Ascending aorta (tissue), 2 donors: ENCODE measurements at regions of chr19 and their contacts with region 1.

Region 1: GRCh38 chr19:37334179-37335071 is 36.5 kb upstream of the ZNF527 start:
- DNase-seq: peak; percentile 69 to 95
- H3K4me3 ChIP-seq: peak overlapping the region; percentile 65 to 67
- H3K27ac ChIP-seq: peak overlapping the region; percentile 57 to 77
- H3K4me1 ChIP-seq: peaks cover 0 to 12% of the 10 kb centered on the region in 2 donors
- H3K27me3 ChIP-seq: no peaks in the 10 kb centered on the region
- CTCF ChIP-seq: no peak

Region 2: DNA sequence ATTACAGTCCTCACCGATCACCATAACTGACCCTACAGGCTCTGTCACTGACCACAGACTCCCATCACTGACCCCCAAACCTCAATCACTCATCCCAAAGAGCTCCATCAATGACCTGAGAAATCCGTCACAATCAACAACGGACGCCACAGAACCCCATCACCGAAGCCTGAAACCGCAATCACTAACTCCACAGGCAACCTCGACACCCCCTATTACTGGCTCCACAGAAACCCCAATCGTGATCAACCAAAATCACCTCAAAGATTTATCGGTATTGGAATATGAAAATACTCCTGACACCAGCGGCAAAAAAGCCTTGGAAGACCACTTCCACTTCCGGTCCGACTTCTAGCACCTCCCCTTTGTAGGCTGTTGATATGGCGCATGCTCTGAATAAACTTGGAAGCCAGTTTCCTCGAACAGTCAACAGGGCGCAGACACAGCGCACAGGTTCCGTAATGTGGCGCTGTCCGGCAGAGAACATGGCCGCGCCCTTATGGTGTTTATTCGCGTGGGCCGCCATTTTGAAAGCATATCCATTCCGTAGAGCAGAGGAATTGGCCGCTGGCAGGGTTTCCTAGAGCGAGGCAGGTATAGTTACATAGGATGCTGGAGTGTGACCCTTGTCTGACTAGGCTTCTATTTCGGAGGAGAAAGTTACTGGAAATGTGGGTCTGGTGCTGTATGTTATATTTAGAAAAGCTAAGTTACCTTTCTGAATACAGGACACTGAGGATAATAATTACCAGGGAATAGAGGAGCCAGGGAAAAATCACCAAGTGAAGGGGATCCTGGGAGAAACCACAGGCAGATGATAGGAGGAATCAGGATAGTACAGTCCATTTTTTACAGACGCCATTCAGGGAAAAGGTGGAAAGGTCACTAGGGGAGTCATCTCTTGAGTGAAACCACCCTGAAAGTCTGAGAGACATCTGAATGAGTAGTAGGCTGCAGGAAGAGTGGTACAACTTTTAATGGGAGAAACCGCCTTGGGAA is 161.8 kb before region 1 on chr19 and contains the start of gene ZNF585A:
- intact Hi-C with region 1: loop called (anchors 10 kb)
- DNase-seq: peak; percentile 85 to 97
- H3K4me3 ChIP-seq: peak within 1 kb of the TSS; percentile 59 to 65
- H3K27ac ChIP-seq: peak within 1 kb of the TSS; percentile 62 to 68
- H3K4me1 ChIP-seq: no peaks in the 10 kb centered on the region
- H3K27me3 ChIP-seq: no peaks in the 10 kb centered on the region
- CTCF ChIP-seq: peak in 1 of 3 experiments; percentile 35
- total RNA-seq, gene ZNF585A: 8.4 TPM

Region 3: DNA sequence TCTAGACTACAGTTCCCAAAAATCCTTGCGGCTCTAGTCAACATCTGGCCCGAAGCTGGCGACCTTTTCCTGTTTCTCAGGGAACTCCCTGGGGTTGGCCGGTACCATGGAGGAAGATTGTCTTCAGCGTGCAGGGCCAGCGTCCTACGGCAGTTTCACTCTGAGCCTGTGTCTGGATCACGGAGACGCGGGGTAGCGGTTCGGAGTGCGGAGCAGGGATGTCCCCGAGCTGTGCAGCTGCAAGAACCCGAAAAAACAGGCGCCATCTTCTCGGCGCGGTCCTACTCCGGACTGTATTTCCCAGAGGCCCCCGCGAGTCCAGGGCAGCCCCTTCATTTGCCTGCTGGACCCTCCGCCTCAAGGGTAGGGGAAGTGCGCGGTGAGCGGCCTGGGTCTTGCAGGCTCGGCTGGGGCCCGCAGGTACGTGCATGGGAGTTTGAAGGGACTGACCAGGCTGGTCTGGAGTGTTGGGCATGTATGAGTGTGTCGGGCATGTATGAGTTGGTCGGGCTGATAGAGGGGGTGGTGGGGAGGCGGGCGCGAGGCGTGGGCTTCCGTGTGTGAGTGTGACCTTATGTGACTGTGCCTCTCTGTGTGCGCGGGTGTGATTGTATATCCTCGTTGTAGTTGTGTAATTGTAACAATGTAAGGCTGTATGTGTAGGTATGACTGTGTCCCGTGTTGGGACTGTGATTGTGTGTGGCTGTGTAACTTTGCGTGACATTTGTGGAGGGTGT is 116.4 kb before region 1 on chr19 and contains the start of gene ZNF383:
- intact Hi-C with region 1: loop called (anchors 5 kb)
- DNase-seq: peak; percentile 47 to 91
- H3K4me3 ChIP-seq: peak within 1 kb of the TSS; percentile 60 to 73
- H3K27ac ChIP-seq: peak within 1 kb of the TSS; percentile 75 to 80
- H3K4me1 ChIP-seq: peaks cover 0 to 4% of the 10 kb centered on the region in 2 donors
- H3K27me3 ChIP-seq: no peaks in the 10 kb centered on the region
- CTCF ChIP-seq: no peak
- total RNA-seq, gene ZNF383: 6.9 TPM

Region 4: DNA sequence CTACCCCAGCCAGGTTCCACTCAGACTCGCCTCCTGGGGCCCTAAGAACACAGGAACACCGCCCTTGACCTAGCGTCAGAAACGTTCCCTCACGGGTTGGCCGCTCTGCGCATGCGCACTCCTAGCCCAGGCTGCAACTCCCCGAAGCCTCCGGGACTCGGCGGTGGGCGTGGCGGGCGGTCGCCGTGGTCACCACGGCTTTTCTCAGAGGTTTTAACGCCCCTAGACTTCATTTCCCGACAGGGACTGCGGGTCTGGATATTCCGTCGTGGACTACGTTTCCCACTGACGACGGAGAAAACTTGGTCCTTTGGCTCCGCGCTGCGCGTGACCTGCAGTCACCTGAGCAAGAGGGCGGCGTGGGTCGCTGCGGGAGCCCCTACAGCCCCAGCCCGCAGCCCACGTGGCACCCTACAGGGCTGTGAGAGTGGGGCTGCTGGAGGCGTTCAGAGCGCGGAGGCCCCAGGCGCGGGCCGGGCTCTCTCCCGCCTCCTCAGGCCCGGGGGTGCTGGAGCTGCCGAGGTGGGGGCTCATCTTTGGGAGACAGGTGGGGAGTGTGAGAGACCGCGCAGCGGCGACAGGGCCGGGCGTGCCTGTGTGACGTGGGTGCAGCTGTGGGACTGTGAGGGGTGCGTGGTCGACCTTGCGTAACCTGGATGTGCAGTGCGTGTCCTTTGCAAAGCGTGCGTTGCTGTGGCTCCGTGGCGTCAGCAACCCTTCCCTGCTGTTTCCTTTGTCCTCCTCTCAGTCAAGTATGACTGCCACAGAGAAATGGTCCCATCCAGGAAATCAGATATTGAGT is 483.0 kb after region 1 on chr19:
- intact Hi-C with region 1: no loop called
- DNase-seq: peak in 1 of 2 donors; percentile 73
- H3K4me3 ChIP-seq: peak overlapping the region; percentile 59 to 74
- H3K27ac ChIP-seq: peak overlapping the region in 1 of 2 donors; percentile 25
- H3K4me1 ChIP-seq: no peaks in the 10 kb centered on the region
- H3K27me3 ChIP-seq: no peaks in the 10 kb centered on the region
- CTCF ChIP-seq: no peak